MCF 10A (cell line): ENCODE measurements at regions of chr21 and their contacts with region 1.

Region 1: DNA sequence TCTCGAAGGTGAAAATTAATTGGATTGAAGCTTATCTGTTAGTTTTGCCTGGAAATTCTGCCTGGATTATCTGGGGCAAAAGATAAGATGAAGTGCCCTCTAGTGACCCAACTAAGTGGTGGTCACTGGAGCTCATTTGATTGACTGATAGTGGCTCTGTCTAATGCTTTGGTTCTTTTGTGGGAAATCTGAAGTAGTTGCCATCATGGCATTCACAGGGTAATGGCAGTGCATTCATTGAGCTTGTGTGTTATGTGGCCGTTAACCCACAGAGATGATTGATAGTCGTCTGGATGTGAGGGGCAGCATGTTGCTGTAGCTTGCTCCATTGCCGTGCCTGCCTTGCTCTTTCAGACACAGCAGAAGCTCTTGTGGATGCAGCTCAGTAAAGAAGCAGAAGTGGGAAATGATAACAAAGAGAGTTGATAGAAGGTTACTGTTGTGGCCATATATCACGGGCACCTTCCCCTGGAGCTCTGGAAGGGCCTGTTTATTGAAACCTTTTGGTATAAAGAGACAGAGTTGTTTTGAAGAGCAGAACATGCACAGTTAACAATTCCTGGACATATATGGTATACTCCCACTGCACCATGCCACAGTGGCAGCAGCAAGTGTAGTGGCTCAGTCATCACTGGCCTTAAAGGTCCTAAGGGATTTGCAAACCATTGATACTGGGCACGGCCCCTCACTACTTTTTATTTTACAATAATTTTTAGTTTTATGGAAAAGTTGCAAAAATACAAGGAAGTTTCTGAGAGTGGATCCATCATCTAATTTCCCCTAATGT is 42.0 kb downstream of the CXADR start:
- DNase-seq: peak; percentile 35
- H3K4me3 Mint-ChIP-seq: no peak overlapping the region
- H3K27ac Mint-ChIP-seq: no peak overlapping the region
- H3K4me1 Mint-ChIP-seq: peaks cover 11% of the 10 kb centered on the region
- H3K27me3 Mint-ChIP-seq: no peaks in the 10 kb centered on the region
- CTCF ChIP-seq: peak; percentile 26

Region 2: DNA sequence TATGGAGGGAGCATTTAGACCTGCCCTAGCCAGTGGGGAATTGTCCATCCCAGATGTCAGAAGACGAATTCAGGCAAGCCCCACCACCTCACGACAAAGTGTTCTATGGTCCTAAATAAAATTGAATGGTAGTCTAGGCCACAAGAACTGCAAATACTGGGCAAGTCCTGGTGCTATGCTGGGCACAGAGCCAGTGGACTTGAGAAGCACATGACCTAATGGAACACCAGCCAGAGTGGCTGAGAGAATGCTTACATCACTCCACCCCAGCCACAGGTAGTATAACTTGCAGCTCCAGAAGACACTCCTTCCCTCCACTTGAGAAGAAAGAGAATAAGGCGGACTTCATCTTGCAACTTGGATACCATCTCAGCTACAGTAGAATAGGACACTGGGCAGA is 609.3 kb before region 1 on chr21:
- CTCF ChIA-PET with region 1: no interaction called
- POLR2A ChIA-PET with region 1: no interaction called
- intact Hi-C with region 1: no loop called
- DNase-seq: no peak
- H3K4me3 Mint-ChIP-seq: no peak overlapping the region
- H3K27ac Mint-ChIP-seq: no peak overlapping the region
- H3K4me1 Mint-ChIP-seq: no peaks in the 10 kb centered on the region
- H3K27me3 Mint-ChIP-seq: no peaks in the 10 kb centered on the region
- CTCF ChIP-seq: no peak

Region 3: GRCh38 chr21:17572431-17572830 is 17.6 kb after region 1 on chr21:
- CTCF ChIA-PET with region 1: no interaction called
- POLR2A ChIA-PET with region 1: no interaction called
- intact Hi-C with region 1: no loop called
- DNase-seq: no peak
- H3K4me3 Mint-ChIP-seq: no peak overlapping the region
- H3K27ac Mint-ChIP-seq: no peak overlapping the region
- H3K4me1 Mint-ChIP-seq: no peaks in the 10 kb centered on the region
- H3K27me3 Mint-ChIP-seq: no peaks in the 10 kb centered on the region
- CTCF ChIP-seq: no peak

Region 4: DNA sequence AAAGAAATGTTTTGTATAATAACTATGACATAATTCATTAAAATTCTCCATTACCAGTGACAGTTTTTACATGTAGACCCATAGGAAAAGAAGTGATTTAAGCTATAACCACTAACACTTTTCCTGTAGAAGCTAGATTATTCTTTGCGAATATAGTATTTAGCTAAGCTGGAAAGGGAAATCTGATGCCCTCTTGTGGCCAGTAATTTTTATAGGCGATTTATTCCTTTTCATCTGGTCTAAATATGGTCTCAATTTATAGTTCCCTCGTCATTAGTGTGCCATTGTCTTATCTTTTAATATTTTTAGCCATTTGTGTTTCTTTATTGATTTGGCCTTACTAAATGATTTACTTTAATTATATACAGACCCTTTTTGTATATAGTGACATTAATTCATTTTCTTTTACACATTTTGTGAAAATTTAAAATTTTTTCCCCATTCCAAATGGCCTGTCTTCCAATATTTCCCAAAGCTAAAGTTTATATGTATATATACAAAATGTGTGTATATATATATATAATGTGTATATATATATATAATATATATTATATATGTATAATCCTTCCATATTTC is 31.1 kb after region 1 on chr21:
- CTCF ChIA-PET with region 1: interaction called, 15 read pairs
- POLR2A ChIA-PET with region 1: no interaction called
- intact Hi-C with region 1: no loop called
- DNase-seq: peak; percentile 62
- H3K4me3 Mint-ChIP-seq: no peak overlapping the region
- H3K27ac Mint-ChIP-seq: no peak overlapping the region
- H3K4me1 Mint-ChIP-seq: no peaks in the 10 kb centered on the region
- H3K27me3 Mint-ChIP-seq: no peaks in the 10 kb centered on the region
- CTCF ChIP-seq: peak; percentile 45